Right cardiac atrium (tissue), 5 donors: ENCODE measurements at regions of chr18 and their contacts with region 1.

Region 1: DNA sequence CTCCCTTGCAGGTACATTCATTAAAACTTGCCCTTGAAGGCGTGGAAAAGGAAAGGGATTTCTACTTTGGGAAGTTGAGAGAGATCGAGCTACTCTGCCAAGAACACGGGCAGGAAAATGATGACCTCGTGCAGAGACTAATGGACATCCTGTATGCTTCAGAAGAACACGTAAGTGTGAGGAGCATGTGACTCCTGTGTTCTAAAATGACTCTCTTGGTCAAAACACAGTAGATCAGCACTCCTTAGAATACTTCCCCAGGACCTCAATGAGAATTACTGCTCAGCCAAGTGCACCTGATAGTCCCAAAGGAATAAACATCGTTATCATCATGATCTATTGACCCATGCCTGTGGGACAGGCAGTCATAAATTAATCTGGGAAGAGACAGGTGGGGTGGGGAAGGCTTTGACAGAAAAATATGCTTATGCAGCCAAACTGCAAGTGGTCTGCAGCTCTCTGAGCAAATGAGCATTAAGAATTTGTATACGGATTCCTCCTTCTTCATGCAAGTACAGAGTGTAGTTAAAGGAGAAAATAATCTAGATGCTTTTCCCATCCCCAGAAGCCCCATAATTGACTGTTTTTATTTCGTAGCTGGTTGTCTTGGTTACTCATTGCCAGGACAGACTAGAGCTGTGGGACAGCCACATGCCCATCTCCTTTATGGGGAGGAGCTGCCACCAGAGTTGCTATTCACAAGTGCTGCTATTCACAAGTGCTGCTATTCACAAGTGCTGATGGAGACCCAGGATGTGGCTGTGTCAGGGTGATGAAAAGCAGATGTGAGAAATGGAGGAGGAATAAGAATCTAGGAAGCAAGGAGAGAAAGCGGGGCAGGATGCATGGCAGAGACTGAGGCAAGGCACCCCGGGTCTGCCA is 91.0 kb downstream of the MAPRE2 start:
- DNase-seq: no peak
- ATAC-seq: peak; percentile 63 to 68
- H3K4me3 ChIP-seq: no peak overlapping the region
- H3K27ac ChIP-seq: peak overlapping the region; percentile 60
- H3K4me1 ChIP-seq: peaks cover 13% of the 10 kb centered on the region
- H3K27me3 ChIP-seq: no peaks in the 10 kb centered on the region

Region 2: DNA sequence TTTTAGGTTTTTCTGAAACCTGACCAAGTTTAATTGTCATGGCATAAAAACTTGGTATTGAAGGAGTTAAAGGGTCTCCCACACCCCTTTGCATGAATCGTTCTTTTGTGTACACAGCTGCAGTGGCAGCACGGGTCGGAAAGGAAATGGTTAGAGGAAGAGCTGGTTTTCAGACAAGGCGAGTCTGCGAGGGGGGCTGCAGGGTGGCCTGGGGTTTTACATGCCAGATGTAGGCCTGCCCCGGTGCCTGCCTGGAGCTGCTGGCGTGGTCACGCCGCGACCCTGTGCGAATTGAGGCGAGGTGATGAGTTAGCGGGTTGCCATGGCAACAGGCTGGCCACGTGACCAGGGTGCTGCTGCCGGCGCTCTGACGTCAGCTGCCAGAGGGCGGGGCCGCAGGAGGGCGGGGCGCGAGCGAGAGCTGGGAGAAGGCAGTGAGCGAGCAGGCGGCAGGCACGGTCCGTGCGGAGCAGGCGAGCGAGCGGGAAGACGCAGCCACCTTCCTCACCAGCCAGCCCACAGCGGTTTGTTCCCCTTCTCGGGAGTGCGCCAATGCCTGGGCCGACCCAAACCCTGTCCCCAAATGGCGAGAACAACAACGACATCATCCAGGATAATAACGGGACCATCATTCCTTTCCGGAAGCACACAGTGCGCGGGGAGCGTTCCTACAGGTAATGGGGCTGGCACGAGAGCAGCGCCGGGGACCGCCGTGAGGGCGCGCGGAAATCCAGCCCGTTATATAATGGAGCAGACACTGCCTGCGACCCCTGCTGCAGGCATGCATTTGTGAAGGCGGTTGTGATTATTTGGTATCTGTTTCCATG is 91.1 kb before region 1 on chr18 and contains the start of gene MAPRE2:
- intact Hi-C with region 1: loop called in 2 of 4 experiments (anchors 10 kb)
- DNase-seq: peak; percentile 100
- ATAC-seq: peak; percentile 98
- H3K4me3 ChIP-seq: peak within 1 kb of the TSS; percentile 74
- H3K27ac ChIP-seq: peak within 1 kb of the TSS; percentile 81
- H3K4me1 ChIP-seq: peaks cover 7% of the 10 kb centered on the region
- H3K27me3 ChIP-seq: no peaks in the 10 kb centered on the region
- total RNA-seq, gene MAPRE2: 86.2 to 108 (median 92.0) TPM

Region 3: GRCh38 chr18:35397976-35398375 is 265.7 kb after region 1 on chr18:
- intact Hi-C with region 1: no loop called
- DNase-seq: no peak
- ATAC-seq: no peak
- H3K4me3 ChIP-seq: no peak overlapping the region
- H3K27ac ChIP-seq: no peak overlapping the region
- H3K4me1 ChIP-seq: no peaks in the 10 kb centered on the region
- H3K27me3 ChIP-seq: no peaks in the 10 kb centered on the region